ENCODE measurements at regions of chrX and their contacts with region 1.

Region 1: GRCh38 chrX:129754056-129755024 is 15.6 kb downstream of the XPNPEP2 start:
- DNase-seq: no peak
- ATAC-seq: no peak
- H3K4me3 Mint-ChIP-seq: peak overlapping the region; percentile 11
- H3K27ac Mint-ChIP-seq: peak overlapping the region; percentile 50
- H3K4me1 Mint-ChIP-seq: peaks cover 49% of the 10 kb centered on the region
- H3K27me3 Mint-ChIP-seq: no peaks in the 10 kb centered on the region
- CTCF ChIP-seq: no peak

Region 2: DNA sequence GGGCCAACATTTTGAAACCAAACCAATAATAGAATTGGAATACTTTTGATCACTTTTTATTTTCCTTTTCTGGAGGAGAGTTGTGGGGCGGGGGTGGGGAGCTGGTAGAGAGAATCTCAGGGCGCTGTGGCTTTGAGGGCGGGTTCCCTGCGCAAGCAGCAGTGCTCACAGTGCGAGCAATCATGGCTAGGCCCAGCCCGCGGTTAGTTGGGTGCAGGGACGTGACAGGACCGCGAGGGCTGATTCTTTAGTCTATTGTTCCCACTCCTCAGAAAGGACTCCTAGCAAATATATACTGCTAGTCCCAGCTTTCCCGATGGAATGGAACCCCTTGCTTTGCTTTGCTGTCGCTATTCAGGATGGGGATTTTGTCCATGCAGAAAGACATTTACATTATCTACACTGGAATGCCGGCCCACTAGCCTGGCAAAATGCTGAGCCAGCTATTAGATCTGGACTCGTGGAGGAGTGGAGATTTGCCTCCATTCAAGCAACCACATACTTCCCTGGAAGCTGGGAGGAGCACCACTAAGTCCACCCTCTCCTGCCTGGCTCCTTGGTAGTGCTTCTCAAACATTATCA is 75.6 kb before region 1 on chrX:
- CTCF ChIA-PET with region 1: no interaction called
- POLR2A ChIA-PET with region 1: interaction called, 4 read pairs
- intact Hi-C with region 1: loop called (anchors 1 kb)
- DNase-seq: no peak
- ATAC-seq: peak; percentile 28
- H3K4me3 Mint-ChIP-seq: peak overlapping the region; percentile 78
- H3K27ac Mint-ChIP-seq: peak overlapping the region; percentile 65
- H3K4me1 Mint-ChIP-seq: peaks cover 14% of the 10 kb centered on the region
- H3K27me3 Mint-ChIP-seq: no peaks in the 10 kb centered on the region
- CTCF ChIP-seq: no peak

Region 3: DNA sequence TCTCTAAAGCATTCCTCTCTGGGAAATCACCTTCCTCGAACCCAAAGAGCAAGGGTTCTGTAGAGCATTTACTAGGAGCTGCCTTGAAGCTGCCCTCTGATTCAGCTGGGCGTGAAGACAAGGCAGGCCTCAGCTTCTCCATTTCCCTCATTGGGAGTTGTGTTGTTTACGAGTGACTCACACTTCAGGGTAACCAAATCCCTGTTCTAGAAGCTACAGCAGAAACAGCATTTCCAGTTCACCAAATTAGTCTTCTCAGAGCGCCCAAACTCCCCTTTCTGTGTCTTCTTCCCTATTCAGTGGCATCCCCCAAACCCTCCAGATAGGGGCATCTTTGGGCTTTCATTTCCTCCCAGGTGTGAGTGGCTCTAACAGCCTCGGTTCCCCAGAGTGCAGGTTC is 16.4 kb before region 1 on chrX:
- CTCF ChIA-PET with region 1: no interaction called
- POLR2A ChIA-PET with region 1: interaction called, 5 read pairs
- intact Hi-C with region 1: loop called (anchors 2 kb)
- DNase-seq: no peak
- ATAC-seq: peak; percentile 79
- H3K4me3 Mint-ChIP-seq: no peak overlapping the region
- H3K27ac Mint-ChIP-seq: peak overlapping the region; percentile 63
- H3K4me1 Mint-ChIP-seq: peaks cover 36% of the 10 kb centered on the region
- H3K27me3 Mint-ChIP-seq: no peaks in the 10 kb centered on the region
- CTCF ChIP-seq: no peak